Activated CD4-positive, alpha-beta T cell treated with anti-CD3 and anti-CD28 coated beads, Interleukin-2, amount 10 ng/mL, durations not matched to agents 24 days and 14 days (primary cell): ENCODE measurements at regions of chr6 and their contacts with region 1.

Region 1: GRCh38 chr6:45714741-45715507 is 300.7 kb downstream of the CLIC5 start:
- DNase-seq: peak; percentile 88
- H3K4me3 Mint-ChIP-seq: peak overlapping the region; percentile 50
- H3K27ac Mint-ChIP-seq: peak overlapping the region; percentile 89
- H3K4me1 Mint-ChIP-seq: peaks cover 53% of the 10 kb centered on the region
- H3K27me3 Mint-ChIP-seq: peaks cover 3% of the 10 kb centered on the region

Region 2: DNA sequence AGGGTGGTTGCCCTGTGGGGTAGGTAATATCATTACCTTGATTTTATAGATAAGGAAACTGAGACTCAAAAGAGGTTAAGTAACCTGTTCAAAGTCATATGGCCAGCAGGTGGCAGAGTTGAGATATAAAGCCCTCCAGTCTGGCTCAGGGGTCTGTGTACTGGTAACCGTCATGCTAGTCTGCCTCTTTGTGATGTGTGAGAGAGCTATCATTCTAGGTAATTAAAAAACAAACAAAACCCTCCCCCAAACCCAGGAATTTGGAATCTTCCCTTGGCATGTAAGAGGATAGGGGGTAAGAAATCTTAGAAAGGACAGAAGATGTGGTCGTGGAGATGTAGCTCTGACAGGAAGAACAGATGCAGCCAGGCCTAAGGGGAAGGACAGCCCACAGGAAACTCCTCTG is 1121.4 kb before region 1 on chr6:
- intact Hi-C with region 1: loop called (anchors 5 kb)
- DNase-seq: peak; percentile 85
- H3K4me3 Mint-ChIP-seq: no peak overlapping the region
- H3K27ac Mint-ChIP-seq: no peak overlapping the region
- H3K4me1 Mint-ChIP-seq: no peaks in the 10 kb centered on the region
- H3K27me3 Mint-ChIP-seq: peaks cover 13% of the 10 kb centered on the region

Region 3: GRCh38 chr6:45156075-45156474 is 558.8 kb before region 1 on chr6:
- intact Hi-C with region 1: loop called (anchors 2 kb)
- DNase-seq: peak; percentile 88
- H3K4me3 Mint-ChIP-seq: no peak overlapping the region
- H3K27ac Mint-ChIP-seq: peak overlapping the region; percentile 72
- H3K4me1 Mint-ChIP-seq: peaks cover 26% of the 10 kb centered on the region
- H3K27me3 Mint-ChIP-seq: no peaks in the 10 kb centered on the region

Region 4: DNA sequence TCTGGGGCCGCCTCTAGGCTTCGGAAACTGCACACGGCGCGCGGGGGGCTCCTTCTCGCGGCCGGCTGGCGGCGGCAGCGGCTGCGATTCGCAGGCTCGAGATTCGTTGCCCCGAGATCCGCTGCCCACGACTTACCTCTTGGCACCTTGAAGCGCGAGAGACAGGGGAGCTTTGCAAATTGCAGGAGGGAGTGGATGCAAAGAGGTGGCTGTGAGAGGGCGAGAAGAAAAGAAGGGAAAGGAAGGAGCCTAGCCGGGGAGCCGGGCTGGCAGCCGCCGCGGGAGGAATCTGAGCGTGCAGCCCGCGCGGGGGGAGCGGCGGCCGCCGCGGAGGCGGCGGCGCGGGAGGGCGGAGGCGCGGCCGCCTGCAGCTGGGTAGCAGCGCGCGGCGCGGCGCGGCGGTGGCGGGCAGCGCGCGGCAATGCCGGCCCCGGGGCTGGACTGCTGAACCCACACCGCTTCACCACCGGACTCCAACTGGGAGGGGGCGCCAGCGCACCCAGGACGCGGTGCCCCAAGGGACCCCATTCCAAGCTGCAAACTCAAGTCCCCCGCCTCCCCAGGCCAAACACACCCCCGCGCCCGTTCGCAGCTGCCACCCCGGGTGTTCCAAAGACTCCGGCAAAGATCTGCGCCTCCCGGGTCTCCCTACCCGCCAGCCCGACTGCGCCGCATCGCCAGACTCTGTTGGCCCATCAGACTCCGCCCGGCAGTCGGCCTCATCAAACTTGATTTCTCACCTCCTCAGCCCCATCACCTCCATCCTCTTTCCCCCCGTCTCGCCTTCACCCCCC is 293.0 kb before region 1 on chr6:
- intact Hi-C with region 1: loop called (anchors 1 kb)
- DNase-seq: peak; percentile 84
- H3K4me3 Mint-ChIP-seq: peak overlapping the region; percentile 94
- H3K27ac Mint-ChIP-seq: peak overlapping the region; percentile 98
- H3K4me1 Mint-ChIP-seq: peaks cover 44% of the 10 kb centered on the region
- H3K27me3 Mint-ChIP-seq: peaks cover 18% of the 10 kb centered on the region

Region 5: DNA sequence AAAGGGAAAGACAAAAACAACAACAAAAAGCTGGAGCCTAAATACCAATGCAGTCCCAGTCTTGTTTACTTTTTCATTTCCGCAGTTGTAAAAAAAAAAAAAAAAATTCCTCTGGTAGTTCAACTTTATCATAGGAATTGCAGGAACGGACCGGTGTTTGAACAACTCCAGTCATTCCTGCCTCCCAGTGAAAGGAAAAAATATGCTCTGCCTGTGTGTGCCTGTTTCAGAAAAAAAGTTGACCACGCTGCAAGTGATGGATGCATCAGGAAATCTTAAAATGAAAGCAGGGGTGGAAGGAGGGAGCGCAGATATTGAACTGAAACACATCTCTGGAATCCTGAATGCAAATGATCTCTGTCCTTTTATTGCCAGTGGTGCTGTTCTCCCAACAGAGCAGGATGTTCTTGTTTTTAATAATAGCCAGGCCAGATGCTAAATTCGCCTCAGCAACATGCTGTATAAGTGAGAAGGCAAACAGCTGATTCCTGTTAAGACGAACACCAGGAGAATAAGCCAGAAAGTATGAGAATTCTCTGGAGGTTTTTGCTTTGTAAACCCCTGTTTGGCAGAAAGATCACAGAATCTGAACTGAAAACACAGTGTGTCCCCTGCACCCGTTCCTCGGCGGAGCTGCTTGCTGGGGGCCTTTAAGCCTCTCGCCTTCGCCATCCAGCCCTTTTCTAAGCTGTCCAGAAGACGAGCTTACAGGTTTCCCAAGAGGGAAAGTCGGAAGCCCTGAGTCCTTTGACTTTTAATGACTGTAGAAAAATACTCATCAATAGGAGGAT is 158.7 kb before region 1 on chr6:
- intact Hi-C with region 1: loop called (anchors 2 kb)
- DNase-seq: no peak
- H3K4me3 Mint-ChIP-seq: no peak overlapping the region
- H3K27ac Mint-ChIP-seq: no peak overlapping the region
- H3K4me1 Mint-ChIP-seq: peaks cover 41% of the 10 kb centered on the region
- H3K27me3 Mint-ChIP-seq: no peaks in the 10 kb centered on the region

Region 6: DNA sequence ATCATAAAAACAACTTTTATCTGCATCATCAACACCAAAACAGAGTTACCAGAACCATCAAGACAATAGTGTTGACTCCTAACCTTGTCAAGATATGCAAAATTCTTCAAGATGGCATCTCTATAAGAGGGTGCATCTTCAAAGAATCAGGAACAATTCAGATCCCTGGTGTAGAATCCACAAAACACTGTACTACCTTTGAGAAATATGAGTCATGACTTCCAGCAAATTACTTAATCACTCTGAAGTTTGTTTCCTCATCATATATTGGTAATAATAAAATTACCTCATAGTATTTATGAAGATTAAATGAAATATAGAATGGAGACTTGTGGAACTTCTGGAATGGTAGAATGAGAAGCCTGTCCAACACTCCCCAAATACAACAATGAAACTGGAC is 115.9 kb before region 1 on chr6:
- intact Hi-C with region 1: no loop called
- DNase-seq: no peak
- H3K4me3 Mint-ChIP-seq: no peak overlapping the region
- H3K27ac Mint-ChIP-seq: no peak overlapping the region
- H3K4me1 Mint-ChIP-seq: peaks cover 12% of the 10 kb centered on the region
- H3K27me3 Mint-ChIP-seq: no peaks in the 10 kb centered on the region

Region 7: GRCh38 chr6:45737331-45738056 is 22.6 kb after region 1 on chr6:
- intact Hi-C with region 1: loop called (anchors 1 kb)
- DNase-seq: peak; percentile 82
- H3K4me3 Mint-ChIP-seq: peak overlapping the region; percentile 68
- H3K27ac Mint-ChIP-seq: peak overlapping the region; percentile 85
- H3K4me1 Mint-ChIP-seq: peaks cover 53% of the 10 kb centered on the region
- H3K27me3 Mint-ChIP-seq: peaks cover 3% of the 10 kb centered on the region

Region 8: DNA sequence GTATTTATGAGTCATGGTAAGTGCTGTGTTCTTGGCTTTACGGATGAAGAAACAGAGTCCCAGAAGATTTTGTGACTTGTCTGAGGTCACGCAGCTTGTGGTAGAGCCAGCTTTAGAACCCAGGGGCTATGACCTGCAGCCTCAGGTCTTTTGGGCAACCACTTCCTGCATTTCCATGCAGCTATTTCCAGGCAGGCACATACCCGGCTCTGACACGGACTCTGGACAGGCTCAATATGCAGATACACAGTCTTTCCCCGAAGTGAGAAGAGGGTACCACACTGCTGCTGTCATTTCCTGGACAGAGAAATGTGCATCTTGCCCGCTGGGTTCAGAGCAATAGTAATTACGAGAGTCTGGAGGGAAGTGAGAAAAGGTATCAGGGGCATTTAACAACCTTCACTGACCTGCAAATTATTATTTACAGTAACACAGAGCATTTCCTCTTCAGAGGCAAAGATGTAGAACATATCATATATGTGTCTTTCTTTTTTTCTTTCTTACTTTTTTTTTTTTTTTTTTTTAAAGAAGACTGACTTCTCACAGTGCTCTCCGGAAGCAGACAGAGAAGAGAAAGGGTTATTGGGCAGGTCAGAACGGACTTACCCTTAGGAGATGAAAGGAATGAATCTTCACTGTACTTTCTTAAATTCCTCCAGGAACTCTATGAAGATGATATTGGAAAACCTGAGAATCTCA is 115.7 kb after region 1 on chr6:
- intact Hi-C with region 1: loop called (anchors 2 kb)
- DNase-seq: peak; percentile 82
- H3K4me3 Mint-ChIP-seq: peak overlapping the region; percentile 76
- H3K27ac Mint-ChIP-seq: peak overlapping the region; percentile 91
- H3K4me1 Mint-ChIP-seq: peaks cover 38% of the 10 kb centered on the region
- H3K27me3 Mint-ChIP-seq: no peaks in the 10 kb centered on the region